Prostate gland (tissue), 2 donors: ENCODE measurements at regions of chr2 and their contacts with region 1.

Region 1: GRCh38 chr2:216632952-216633615 is at the start of gene IGFBP2:
- DNase-seq: peak; percentile 24
- H3K4me3 ChIP-seq: peak within 1 kb of the TSS; percentile 57 to 60
- H3K27ac ChIP-seq: peak within 1 kb of the TSS; percentile 54 to 61
- H3K4me1 ChIP-seq: no peaks in the 10 kb centered on the region
- H3K27me3 ChIP-seq: no peaks in the 10 kb centered on the region
- CTCF ChIP-seq: no peak
- POLR2A ChIP-seq: peak; percentile 14
- total RNA-seq, gene IGFBP2: 152 to 250 TPM

Region 2: DNA sequence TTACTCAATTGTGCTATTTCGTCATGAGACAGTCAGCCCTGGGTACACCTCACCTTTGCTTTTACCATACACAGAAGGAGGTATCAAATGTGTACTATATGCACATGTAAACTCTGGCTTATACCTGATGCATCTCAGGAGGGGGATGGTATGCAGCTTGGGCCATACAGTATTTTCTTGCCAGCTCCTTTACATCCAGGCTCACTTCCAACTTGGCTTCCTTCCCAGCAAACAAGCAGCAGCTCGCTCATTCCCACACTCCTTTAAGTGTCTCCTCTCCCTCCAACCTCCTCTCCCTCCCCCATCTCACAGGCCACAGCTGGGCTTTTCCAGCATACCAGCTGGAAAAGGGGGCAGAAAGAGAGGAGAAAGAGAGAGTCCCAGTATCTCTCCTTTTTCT is 270.4 kb before region 1 on chr2:
- intact Hi-C with region 1: no loop called
- DNase-seq: no peak
- H3K4me3 ChIP-seq: no peak overlapping the region
- H3K27ac ChIP-seq: no peak overlapping the region
- H3K4me1 ChIP-seq: no peaks in the 10 kb centered on the region
- H3K27me3 ChIP-seq: no peaks in the 10 kb centered on the region
- CTCF ChIP-seq: no peak
- POLR2A ChIP-seq: no peak

Region 3: DNA sequence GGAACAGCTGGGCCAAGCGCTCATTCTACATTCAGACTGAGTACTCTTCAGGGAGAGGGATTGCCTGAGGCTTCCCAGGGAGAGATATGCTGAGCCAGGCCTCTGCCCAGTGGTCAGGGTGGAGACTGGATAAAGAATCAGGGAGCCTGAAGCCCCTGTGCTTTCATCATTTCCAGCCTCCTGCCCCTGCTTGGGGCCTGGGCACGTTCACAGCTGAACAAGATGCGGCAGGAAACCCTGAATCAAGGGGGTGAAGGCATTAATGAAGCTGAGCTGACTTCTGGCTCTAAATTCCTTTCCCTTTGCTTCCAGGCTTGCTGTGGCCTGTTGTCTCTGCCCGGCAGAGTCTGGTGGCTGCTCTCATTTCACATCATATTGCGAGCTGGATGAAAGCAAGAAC is 99.5 kb before region 1 on chr2:
- intact Hi-C with region 1: loop called (anchors 5 kb)
- DNase-seq: peak; percentile 65
- H3K4me3 ChIP-seq: no peak overlapping the region
- H3K27ac ChIP-seq: peak overlapping the region; percentile 31 to 66
- H3K4me1 ChIP-seq: peaks cover 8% of the 10 kb centered on the region
- H3K27me3 ChIP-seq: no peaks in the 10 kb centered on the region
- CTCF ChIP-seq: no peak
- POLR2A ChIP-seq: no peak

Region 4: GRCh38 chr2:216596236-216596979 is 36.7 kb before region 1 on chr2:
- intact Hi-C with region 1: loop called (anchors 5 kb)
- DNase-seq: no peak
- H3K4me3 ChIP-seq: no peak overlapping the region
- H3K27ac ChIP-seq: peak overlapping the region; percentile 15 to 17
- H3K4me1 ChIP-seq: peaks cover 9% of the 10 kb centered on the region
- H3K27me3 ChIP-seq: no peaks in the 10 kb centered on the region
- CTCF ChIP-seq: no peak
- POLR2A ChIP-seq: no peak

Region 5: DNA sequence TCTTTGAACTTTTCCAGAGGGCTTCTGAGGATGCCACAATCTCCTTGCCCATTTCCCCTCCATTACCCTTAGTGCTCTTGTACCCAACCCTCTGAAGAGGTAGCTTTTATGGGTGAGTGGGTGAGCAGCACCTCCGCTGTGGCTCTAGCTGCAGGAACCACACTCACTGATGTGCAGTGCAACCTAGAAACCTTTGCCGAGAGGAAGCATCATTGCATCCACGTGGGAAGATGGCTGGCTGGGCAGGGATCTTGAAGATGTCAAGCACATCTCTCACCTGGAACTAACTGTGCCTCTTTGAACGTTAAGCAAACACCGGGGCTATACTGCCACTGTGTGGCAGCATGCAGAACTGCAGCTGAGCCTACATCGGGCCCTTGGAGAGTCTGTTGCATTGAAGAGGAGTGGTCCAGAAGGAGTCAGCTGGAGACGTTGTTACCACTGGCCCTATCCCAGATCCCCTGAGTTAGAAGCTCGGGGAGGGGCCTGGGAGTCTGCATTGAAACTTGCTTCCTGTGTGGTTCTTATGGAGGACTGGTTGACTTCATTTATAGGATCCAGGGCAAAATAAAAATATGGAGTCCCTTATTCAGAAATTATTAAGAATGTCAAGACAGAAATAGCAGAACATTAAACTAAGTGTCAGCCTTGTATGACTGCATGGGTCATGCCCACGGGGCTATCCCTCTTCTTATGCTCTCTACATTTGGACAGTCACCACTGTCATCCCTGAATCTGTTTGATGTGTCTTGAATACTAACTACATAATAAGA is 33.6 kb after region 1 on chr2:
- intact Hi-C with region 1: loop called (anchors 2 kb)
- DNase-seq: peak; percentile 67
- H3K4me3 ChIP-seq: no peak overlapping the region
- H3K27ac ChIP-seq: no peak overlapping the region
- H3K4me1 ChIP-seq: peaks cover 4% of the 10 kb centered on the region
- H3K27me3 ChIP-seq: no peaks in the 10 kb centered on the region
- CTCF ChIP-seq: peak; percentile 90 to 98 (median 97)
- POLR2A ChIP-seq: no peak